Activated naive CD4-positive, alpha-beta T cell treated with anti-CD3 and anti-CD28 coated beads, Interleukin-2, amount 10 ng/mL, durations not matched to agents 7 days and 5 days (primary cell): ENCODE measurements at regions of chr22 and their contacts with region 1.

Region 1: DNA sequence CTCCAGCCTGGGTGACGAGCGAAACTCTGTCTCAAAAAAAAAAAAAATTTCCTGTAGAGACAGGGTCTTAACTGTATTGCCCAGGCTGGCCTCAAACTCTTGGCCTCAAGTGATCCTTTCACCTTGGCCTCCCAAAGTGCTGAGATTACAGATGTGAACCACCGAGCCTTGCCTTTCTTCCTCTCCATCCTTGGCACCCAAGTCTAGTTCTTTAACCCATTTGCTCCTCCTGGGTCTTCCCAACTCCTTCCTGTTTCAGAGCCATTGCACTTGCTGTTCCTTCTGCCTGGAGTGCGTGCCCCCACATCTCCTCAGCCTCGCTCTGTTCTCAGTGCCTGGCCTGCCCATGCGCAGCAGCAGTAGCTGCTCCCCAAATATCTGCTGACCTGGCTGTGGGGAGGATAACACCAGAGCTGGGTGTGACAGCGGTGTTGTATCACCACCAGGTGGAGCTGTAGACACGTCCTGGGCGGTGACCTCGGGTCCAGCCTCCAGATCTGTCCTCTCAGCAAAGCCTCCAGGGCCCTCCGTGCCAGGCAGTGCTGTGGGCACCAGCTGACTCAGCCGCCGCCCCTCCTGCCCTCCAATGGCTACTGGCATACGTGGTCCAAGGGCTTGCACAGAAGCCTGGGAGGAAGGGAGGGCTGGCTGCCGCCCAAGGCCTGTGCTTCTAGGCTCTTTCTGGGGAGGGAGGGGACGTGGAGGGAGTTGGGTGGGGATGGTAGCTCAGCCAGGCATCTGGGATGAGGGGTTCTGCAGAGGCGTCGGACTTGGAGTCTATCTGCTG is 22.0 kb downstream of the TEF start:
- DNase-seq: peak; percentile 91
- H3K4me3 Mint-ChIP-seq: no peak overlapping the region
- H3K27ac Mint-ChIP-seq: no peak overlapping the region
- H3K4me1 Mint-ChIP-seq: peaks cover 7% of the 10 kb centered on the region
- H3K27me3 Mint-ChIP-seq: peaks cover 4% of the 10 kb centered on the region

Region 2: DNA sequence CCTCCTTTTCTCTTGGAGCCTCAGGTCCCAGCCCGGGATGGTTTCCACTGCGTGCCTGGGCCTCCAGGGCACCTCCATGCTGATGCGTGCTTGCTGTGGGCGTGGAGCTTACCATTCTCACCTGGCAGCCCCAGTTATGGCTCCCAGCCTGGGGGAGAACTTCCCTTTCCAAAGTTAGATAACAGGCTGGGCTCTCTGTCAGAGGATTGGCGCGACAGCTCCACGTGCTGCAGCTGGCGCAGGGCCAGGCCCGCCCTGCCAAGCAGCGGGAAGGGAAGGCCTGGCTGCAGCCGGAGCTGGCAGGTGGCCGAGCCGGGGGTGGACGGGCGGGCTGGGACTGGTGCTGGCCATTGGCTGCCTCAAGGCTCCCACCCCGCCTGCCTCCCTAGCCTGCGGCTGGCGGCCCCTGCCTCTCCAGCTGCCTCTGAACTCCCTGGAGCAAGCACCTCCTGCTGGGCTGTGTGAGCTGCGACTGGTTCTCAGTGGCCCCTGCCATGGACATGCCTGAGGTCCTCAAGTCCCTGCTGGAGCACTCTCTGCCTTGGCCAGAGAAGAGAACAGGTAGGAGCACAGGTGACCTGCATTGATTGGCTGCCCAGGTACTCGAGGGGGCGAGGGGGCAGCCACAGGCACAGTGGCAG is 36.6 kb before region 1 on chr22:
- CTCF ChIA-PET with region 1: no interaction called
- DNase-seq: no peak
- H3K4me3 Mint-ChIP-seq: no peak overlapping the region
- H3K27ac Mint-ChIP-seq: no peak overlapping the region
- H3K4me1 Mint-ChIP-seq: no peaks in the 10 kb centered on the region
- H3K27me3 Mint-ChIP-seq: peaks cover 53% of the 10 kb centered on the region

Region 3: GRCh38 chr22:41436322-41437113 is 32.8 kb after region 1 on chr22:
- CTCF ChIA-PET with region 1: interaction called, 10 read pairs
- DNase-seq: no peak
- H3K4me3 Mint-ChIP-seq: no peak overlapping the region
- H3K27ac Mint-ChIP-seq: no peak overlapping the region
- H3K4me1 Mint-ChIP-seq: peaks cover 5% of the 10 kb centered on the region
- H3K27me3 Mint-ChIP-seq: no peaks in the 10 kb centered on the region

Region 4: DNA sequence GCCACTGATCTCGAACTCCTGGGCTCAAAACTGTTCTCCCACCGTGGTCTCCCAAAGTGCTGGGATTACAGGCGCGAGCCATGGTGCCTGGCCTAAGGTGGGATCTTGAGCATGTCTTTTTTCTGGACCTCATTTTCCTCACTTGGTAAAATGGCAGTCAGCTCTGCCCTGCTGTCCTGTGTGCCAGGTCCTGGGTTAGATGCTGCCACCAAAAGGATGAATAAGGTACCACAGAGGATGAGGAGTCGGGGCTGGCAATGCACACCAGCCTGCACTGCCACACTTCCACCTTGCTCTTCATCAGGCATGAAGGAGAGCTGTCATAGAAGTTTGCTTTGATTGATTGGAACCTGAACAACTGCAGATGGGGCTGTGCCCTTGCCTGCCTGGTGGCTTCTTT is 97.5 kb after region 1 on chr22:
- CTCF ChIA-PET with region 1: interaction called, 37 read pairs
- DNase-seq: peak; percentile 51
- H3K4me3 Mint-ChIP-seq: no peak overlapping the region
- H3K27ac Mint-ChIP-seq: no peak overlapping the region
- H3K4me1 Mint-ChIP-seq: no peaks in the 10 kb centered on the region
- H3K27me3 Mint-ChIP-seq: no peaks in the 10 kb centered on the region

Region 5: GRCh38 chr22:41517172-41518047 is 113.7 kb after region 1 on chr22:
- CTCF ChIA-PET with region 1: interaction called, 101 read pairs
- DNase-seq: peak; percentile 54
- H3K4me3 Mint-ChIP-seq: no peak overlapping the region
- H3K27ac Mint-ChIP-seq: no peak overlapping the region
- H3K4me1 Mint-ChIP-seq: no peaks in the 10 kb centered on the region
- H3K27me3 Mint-ChIP-seq: no peaks in the 10 kb centered on the region

Region 6: DNA sequence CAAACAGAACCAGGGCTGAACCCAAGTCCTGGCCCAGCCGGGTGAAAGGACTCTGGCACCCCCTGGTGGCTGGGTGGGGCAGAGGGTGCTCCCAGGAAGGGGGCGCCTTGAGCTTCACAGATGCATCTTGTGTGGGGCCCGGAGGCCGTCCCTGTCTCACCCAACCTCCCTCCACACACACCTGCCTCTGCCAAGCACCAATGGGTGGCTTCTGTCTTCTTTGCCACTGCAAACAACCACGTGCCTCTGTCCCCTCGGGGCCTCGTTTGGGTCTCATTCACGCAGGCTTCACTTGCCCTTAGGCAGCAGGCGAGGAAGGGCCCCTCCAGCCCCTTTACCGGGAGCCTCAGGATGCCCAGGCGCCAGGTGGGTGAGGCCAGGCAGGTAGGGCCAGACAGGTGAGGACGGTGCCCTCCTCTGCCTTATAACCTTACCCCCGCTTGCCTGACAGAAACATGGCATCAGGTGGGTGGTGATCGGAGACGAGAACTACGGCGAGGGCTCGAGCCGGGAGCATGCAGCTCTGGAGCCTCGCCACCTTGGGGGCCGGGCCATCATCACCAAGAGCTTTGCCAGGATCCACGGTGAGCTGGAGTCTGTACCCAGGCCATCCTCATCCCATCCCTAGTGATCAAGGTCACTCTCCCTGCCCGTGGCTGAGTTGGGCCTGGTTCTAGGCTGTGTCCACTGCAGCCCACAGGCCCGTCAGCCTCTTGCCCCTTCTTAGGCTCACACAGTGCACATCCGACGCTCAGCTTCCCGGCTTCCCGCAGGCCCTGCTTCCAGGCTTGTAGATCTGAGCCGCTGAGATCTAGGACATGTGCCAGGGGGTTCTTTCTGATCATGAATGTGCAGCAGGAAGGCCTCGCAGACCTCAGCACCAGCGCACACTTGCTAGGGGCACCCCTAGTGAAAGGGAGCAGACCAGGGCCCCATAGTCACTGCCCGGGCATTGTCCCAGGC is 123.4 kb after region 1 on chr22:
- CTCF ChIA-PET with region 1: interaction called, 101 read pairs
- DNase-seq: peak; percentile 73
- H3K4me3 Mint-ChIP-seq: no peak overlapping the region
- H3K27ac Mint-ChIP-seq: peak overlapping the region; percentile 28
- H3K4me1 Mint-ChIP-seq: peaks cover 19% of the 10 kb centered on the region
- H3K27me3 Mint-ChIP-seq: no peaks in the 10 kb centered on the region